Naive thymus-derived CD4-positive, alpha-beta T cell (primary cell): ENCODE measurements at regions of chr1 and their contacts with region 1.

Region 1: GRCh38 chr1:168178638-168179437 is at the start of gene TIPRL:
- DNase-seq: peak; percentile 88 to 94 (median 93)
- ATAC-seq: peak; percentile 95
- H3K4me3 ChIP-seq: peak within 1 kb of the TSS; percentile 80
- H3K4me3 Mint-ChIP-seq: no peak within 1 kb of the TSS
- H3K27ac ChIP-seq: peak within 1 kb of the TSS; percentile 96
- H3K27ac Mint-ChIP-seq: no peak within 1 kb of the TSS
- H3K4me1 ChIP-seq: peaks cover 14 to 16% of the 10 kb centered on the region in 2 donors
- H3K4me1 Mint-ChIP-seq: peaks cover 3 to 20% (median 9%) of the 10 kb centered on the region in 7 donors
- H3K27me3 ChIP-seq: no peaks in the 10 kb centered on the region
- H3K27me3 Mint-ChIP-seq: peaks cover 2 to 9% (median 2%) of the 10 kb centered on the region in 5 donors
- total RNA-seq, gene TIPRL: 17.2 to 41.2 (median 23.5) TPM

Region 2: GRCh38 chr1:167627865-167628641 is 550.8 kb before region 1 on chr1:
- CTCF ChIA-PET with region 1: no interaction called
- POLR2A ChIA-PET with region 1: no interaction called
- intact Hi-C with region 1: loop called in 1 of 2 experiments (anchors 2 kb)
- DNase-seq: peak; percentile 33 to 84 (median 73)
- ATAC-seq: peak; percentile 84
- H3K4me3 ChIP-seq: peak overlapping the region; percentile 48
- H3K4me3 Mint-ChIP-seq: peak overlapping the region; percentile 82 to 99 (median 92)
- H3K27ac ChIP-seq: peak overlapping the region; percentile 94
- H3K27ac Mint-ChIP-seq: peak overlapping the region; percentile 85 to 98 (median 95)
- H3K4me1 ChIP-seq: peaks cover 44 to 46% of the 10 kb centered on the region in 2 donors
- H3K4me1 Mint-ChIP-seq: peaks cover 48 to 69% (median 63%) of the 10 kb centered on the region in 7 donors
- H3K27me3 ChIP-seq: no peaks in the 10 kb centered on the region
- H3K27me3 Mint-ChIP-seq: no peaks in the 10 kb centered on the region

Region 3: DNA sequence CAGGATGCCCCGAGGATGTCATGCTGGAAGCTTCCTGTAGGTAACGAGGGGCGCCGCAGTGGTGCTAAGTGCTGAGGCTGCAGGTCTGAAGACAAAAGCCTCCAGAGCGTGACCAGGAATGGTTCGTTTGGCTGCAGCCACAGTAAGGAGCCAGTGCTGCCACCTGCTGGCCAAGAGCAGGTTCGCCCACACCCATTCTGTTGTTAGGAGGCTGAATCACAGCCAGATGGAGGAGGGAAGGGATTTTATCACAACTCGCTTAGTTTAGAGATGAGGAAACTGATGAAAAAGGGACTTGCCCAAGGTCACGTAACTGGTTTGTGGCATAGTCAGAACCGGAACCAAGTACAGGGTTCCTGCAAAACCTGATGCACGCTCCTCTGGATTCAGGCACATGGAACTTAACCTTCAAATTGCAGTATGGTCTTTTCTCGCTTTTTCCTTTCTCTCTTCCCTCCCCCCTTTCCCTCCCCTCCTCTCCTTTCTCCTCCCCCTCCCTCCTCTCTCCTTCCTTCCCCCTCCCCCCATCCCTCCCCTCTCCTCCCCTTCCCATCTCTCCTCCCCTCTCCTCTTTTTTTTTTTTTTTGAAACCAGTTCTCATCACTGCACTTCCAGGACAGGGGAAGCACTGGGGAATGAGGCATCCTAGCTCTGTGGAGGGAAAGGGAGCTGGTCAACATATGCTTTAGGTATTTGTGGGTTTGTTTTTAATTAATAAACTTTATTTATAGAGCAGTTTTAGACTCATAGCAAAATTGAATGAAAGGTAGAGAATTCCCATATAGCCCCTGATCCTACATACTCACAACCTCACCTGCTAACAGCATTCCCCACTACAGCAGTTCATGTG is 375.3 kb before region 1 on chr1:
- CTCF ChIA-PET with region 1: no interaction called
- POLR2A ChIA-PET with region 1: no interaction called
- intact Hi-C with region 1: loop called in 1 of 2 experiments (anchors 10 kb)
- DNase-seq: peak; percentile 41 to 83 (median 67)
- ATAC-seq: peak; percentile 95
- H3K4me3 ChIP-seq: no peak overlapping the region
- H3K4me3 Mint-ChIP-seq: peak overlapping the region in 9 of 10 donors; percentile 5 to 74 (median 60)
- H3K27ac ChIP-seq: no peak overlapping the region
- H3K27ac Mint-ChIP-seq: peak overlapping the region in 6 of 9 donors; percentile 38 to 93 (median 83)
- H3K4me1 ChIP-seq: peaks cover 20 to 21% of the 10 kb centered on the region in 2 donors
- H3K4me1 Mint-ChIP-seq: peaks cover 16 to 29% (median 26%) of the 10 kb centered on the region in 7 donors
- H3K27me3 ChIP-seq: no peaks in the 10 kb centered on the region
- H3K27me3 Mint-ChIP-seq: peaks cover 0 to 7% (median 0%) of the 10 kb centered on the region in 5 donors

Region 4: GRCh38 chr1:168054117-168054516 is 124.7 kb before region 1 on chr1:
- CTCF ChIA-PET with region 1: no interaction called
- POLR2A ChIA-PET with region 1: no interaction called
- intact Hi-C with region 1: no loop called
- DNase-seq: no peak
- ATAC-seq: no peak
- H3K4me3 ChIP-seq: no peak overlapping the region
- H3K4me3 Mint-ChIP-seq: no peak overlapping the region
- H3K27ac ChIP-seq: no peak overlapping the region
- H3K27ac Mint-ChIP-seq: no peak overlapping the region
- H3K4me1 ChIP-seq: no peaks in the 10 kb centered on the region
- H3K4me1 Mint-ChIP-seq: peaks cover 0 to 9% (median 0%) of the 10 kb centered on the region in 7 donors
- H3K27me3 ChIP-seq: no peaks in the 10 kb centered on the region
- H3K27me3 Mint-ChIP-seq: no peaks in the 10 kb centered on the region

Region 5: DNA sequence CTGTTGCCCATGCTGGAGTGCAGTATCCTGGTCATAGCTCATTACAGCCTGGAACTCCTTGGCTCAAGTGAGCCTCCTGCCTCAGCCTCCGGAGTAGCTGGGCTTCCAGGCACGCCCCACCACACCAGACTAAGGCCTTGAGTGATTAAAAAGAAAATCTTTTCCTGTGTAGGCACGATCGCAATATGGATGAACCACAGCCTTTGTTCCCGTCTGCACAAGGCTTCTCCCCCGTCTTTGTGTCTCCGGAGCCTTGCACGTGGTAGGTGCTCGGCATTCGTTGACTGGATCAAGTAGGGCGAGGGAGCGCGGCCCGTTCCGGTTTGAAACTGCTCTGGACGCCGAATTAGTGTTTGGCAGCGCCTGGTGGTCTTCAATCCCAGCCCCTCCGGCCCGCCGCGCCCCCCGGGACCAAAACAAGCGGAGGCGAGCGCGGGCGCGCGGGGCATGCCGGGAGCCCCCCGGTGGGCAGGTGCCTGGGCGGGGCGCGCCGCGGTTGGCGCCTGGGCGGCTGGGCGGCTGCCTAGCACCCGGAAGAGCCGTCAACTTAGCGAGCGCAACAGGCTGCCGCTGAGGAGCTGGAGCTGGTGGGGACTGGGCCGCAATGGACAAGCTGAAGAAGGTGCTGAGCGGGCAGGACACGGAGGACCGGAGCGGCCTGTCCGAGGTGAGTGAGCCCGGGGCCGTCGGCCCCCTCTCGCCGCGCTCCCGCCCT is 46.8 kb after region 1 on chr1 and contains the start of gene SFT2D2:
- CTCF ChIA-PET with region 1: interaction called, 7 read pairs
- POLR2A ChIA-PET with region 1: interaction called, 7 read pairs
- intact Hi-C with region 1: loop called (anchors 1 kb)
- DNase-seq: peak; percentile 71 to 86 (median 83)
- ATAC-seq: peak; percentile 97
- H3K4me3 ChIP-seq: peak within 1 kb of the TSS; percentile 88
- H3K4me3 Mint-ChIP-seq: peak within 1 kb of the TSS; percentile 92 to 98 (median 96)
- H3K27ac ChIP-seq: peak within 1 kb of the TSS; percentile 85
- H3K27ac Mint-ChIP-seq: peak within 1 kb of the TSS; percentile 81 to 98 (median 92)
- H3K4me1 ChIP-seq: peaks cover 14 to 15% of the 10 kb centered on the region in 2 donors
- H3K4me1 Mint-ChIP-seq: peaks cover 30 to 56% (median 45%) of the 10 kb centered on the region in 7 donors
- H3K27me3 ChIP-seq: no peaks in the 10 kb centered on the region
- H3K27me3 Mint-ChIP-seq: peaks cover 0 to 7% (median 4%) of the 10 kb centered on the region in 5 donors
- total RNA-seq, gene SFT2D2: 46.9 to 79.8 (median 51.3) TPM

Region 6: DNA sequence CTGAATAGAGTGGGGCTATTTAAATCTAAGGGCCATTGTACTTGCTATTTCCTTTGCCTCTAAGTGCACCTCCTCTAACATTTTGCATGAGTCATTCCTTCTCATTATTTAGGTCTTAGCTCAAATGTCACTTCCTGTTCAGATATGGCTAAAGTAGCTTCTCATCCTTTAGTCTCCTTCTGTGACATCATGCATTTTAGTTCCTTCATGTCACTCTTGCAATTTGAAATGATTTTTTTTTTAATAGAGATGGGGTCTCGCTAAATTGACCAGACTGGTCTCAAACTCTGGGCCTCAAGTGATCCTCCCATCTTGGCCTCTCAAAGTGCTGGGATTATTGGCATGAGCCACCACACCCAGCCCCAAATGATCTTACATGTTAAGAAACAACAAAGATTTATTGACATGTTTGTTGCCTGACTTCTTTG is 108.4 kb after region 1 on chr1:
- CTCF ChIA-PET with region 1: no interaction called
- POLR2A ChIA-PET with region 1: no interaction called
- intact Hi-C with region 1: no loop called
- DNase-seq: no peak
- ATAC-seq: peak; percentile 44
- H3K4me3 ChIP-seq: no peak overlapping the region
- H3K4me3 Mint-ChIP-seq: no peak overlapping the region
- H3K27ac ChIP-seq: no peak overlapping the region
- H3K27ac Mint-ChIP-seq: no peak overlapping the region
- H3K4me1 ChIP-seq: no peaks in the 10 kb centered on the region
- H3K4me1 Mint-ChIP-seq: peaks cover 0 to 23% (median 10%) of the 10 kb centered on the region in 7 donors
- H3K27me3 ChIP-seq: no peaks in the 10 kb centered on the region
- H3K27me3 Mint-ChIP-seq: no peaks in the 10 kb centered on the region

Region 7: GRCh38 chr1:169106095-169106920 is 927.5 kb after region 1 on chr1 and contains the start of gene ATP1B1:
- CTCF ChIA-PET with region 1: no interaction called
- POLR2A ChIA-PET with region 1: no interaction called
- intact Hi-C with region 1: loop called in 1 of 2 experiments (anchors 2 kb)
- DNase-seq: peak; percentile 66 to 90 (median 76)
- ATAC-seq: peak; percentile 95
- H3K4me3 ChIP-seq: peak within 1 kb of the TSS; percentile 67
- H3K4me3 Mint-ChIP-seq: peak within 1 kb of the TSS; percentile 81 to 93 (median 88)
- H3K27ac ChIP-seq: peak within 1 kb of the TSS; percentile 58
- H3K27ac Mint-ChIP-seq: peak within 1 kb of the TSS in 8 of 9 donors; percentile 29 to 85 (median 56)
- H3K4me1 ChIP-seq: peaks cover 7 to 21% of the 10 kb centered on the region in 2 donors
- H3K4me1 Mint-ChIP-seq: peaks cover 24 to 48% (median 40%) of the 10 kb centered on the region in 7 donors
- H3K27me3 ChIP-seq: no peaks in the 10 kb centered on the region
- H3K27me3 Mint-ChIP-seq: peaks cover 0 to 19% (median 0%) of the 10 kb centered on the region in 5 donors
- total RNA-seq, gene ATP1B1: 1.8 to 10.6 (median 2.3) TPM

Region 8: DNA sequence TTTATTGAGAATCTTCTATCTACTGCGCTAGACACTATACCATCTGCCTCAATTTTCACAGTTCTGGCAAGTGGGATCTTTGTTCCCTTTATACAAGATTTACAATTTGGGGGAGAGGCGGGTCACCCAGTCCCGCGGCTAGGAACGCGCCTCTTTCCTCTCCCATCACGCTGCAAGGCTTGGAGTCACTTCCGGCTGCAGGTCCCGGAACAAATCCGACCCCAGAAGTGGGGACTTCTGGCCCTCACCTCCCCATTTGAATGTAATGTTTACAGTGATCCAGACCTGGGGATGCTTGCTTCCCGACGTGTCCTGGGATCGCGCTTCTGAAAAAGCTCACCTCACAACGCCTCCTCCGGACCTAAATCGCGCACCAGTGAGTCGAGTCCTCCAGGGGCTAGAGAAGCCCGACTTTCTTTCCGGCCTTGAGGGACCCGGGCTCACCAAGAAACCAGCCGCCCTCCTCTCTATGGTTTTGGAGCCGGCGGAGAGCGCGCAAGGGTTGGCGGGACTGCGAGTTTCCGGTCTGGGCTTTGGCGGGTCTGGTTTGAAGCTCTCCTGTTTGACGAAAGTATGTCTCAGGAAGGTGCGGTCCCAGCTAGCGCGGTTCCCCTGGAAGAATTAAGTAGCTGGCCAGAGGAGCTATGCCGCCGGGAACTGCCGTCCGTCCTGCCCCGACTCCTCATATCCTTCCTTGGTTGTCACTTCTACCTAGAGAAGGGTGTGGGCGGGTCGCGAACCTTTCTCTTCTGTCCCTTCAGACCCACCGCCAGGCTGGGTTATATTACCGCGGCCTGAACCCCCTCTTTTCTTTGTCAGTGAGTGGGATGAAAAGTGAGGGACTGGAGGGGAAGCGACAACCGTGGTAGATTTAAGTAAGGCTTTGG is 1615.9 kb after region 1 on chr1 and contains the start of gene METTL18:
- CTCF ChIA-PET with region 1: no interaction called
- POLR2A ChIA-PET with region 1: no interaction called
- intact Hi-C with region 1: loop called in 1 of 2 experiments (anchors 1 kb)
- DNase-seq: peak; percentile 72 to 96 (median 92)
- ATAC-seq: peak; percentile 100
- H3K4me3 ChIP-seq: peak within 1 kb of the TSS; percentile 98
- H3K4me3 Mint-ChIP-seq: peak within 1 kb of the TSS; percentile 90 to 100 (median 100)
- H3K27ac ChIP-seq: peak within 1 kb of the TSS; percentile 94
- H3K27ac Mint-ChIP-seq: peak within 1 kb of the TSS; percentile 97 to 100 (median 99)
- H3K4me1 ChIP-seq: peaks cover 10 to 28% of the 10 kb centered on the region in 2 donors
- H3K4me1 Mint-ChIP-seq: peaks cover 26 to 60% (median 56%) of the 10 kb centered on the region in 7 donors
- H3K27me3 ChIP-seq: no peaks in the 10 kb centered on the region
- H3K27me3 Mint-ChIP-seq: no peaks in the 10 kb centered on the region
- total RNA-seq, gene METTL18: 4.9 to 21.1 (median 13.4) TPM